Heart right ventricle (tissue), 16 donors: ENCODE measurements at regions of chr1 and their contacts with region 1.

Region 1: DNA sequence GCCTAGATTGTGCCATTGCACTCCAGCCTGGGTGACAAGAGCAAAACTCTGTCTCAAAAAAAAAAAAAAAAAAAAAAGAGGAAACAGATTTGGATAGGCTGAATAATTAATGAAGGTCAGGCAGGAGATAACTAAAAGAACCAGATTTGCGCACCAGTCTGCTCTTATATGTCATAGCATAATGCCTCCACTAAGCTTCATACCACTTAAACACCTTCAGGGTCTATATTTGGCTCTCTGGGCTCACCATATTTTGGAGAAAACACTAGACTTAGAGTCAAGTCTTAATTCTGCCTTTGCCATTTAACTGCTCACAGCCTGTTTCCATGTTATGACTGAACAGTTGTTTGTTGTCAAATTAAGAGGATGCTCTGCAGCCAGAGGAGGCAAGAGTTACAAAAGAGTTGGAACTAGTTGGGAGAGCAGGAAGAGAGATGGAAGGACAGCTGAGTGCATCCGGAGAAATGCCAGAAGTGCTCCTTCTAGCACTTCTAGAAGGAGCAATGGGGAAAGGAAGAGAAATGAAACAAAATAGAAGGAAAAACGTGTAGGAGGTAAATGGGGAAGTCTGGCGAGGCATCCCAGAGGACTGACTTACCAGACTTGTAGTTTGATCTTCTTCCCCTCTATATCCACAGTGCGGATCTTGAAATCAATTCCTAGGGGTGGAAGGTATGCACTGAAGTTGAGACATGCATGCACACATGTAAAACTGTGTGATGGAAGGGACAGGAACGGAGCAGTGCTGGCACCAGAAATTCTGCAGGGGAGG is 1.8 kb downstream of the RAB13 start:
- DNase-seq: no peak
- ATAC-seq: no peak
- H3K4me3 ChIP-seq: peak overlapping the region in 5 of 10 donors; percentile 53 to 71 (median 64)
- H3K27ac ChIP-seq: peak overlapping the region in 7 of 10 donors; percentile 74 to 91 (median 89)
- H3K4me1 ChIP-seq: peaks cover 8 to 43% (median 19%) of the 10 kb centered on the region in 9 donors
- H3K27me3 ChIP-seq: no peaks in the 10 kb centered on the region
- CTCF ChIP-seq: no peak

Region 2: GRCh38 chr1:153803470-153804056 is 180.7 kb before region 1 on chr1:
- intact Hi-C with region 1: loop called in 3 of 10 experiments (anchors 5 kb)
- DNase-seq: no peak
- ATAC-seq: peak in 4 of 8 donors; percentile 6 to 63 (median 41)
- H3K4me3 ChIP-seq: no peak overlapping the region
- H3K27ac ChIP-seq: peak overlapping the region in 9 of 10 donors; percentile 29 to 74 (median 54)
- H3K4me1 ChIP-seq: peaks cover 3 to 47% (median 31%) of the 10 kb centered on the region in 9 donors
- H3K27me3 ChIP-seq: no peaks in the 10 kb centered on the region
- CTCF ChIP-seq: no peak